A549 (cell line): ENCODE measurements at regions of chr17 and their contacts with region 1.

Region 1: GRCh38 chr17:7632492-7632894 is 2.6 kb downstream of the SHBG start:
- DNase-seq: peak; percentile 71 to 79
- ATAC-seq: peak; percentile 57 to 69; a peak in 5 of 6 replicates
- H3K4me3 ChIP-seq: no peak overlapping the region
- H3K27ac ChIP-seq: peak overlapping the region in 1 of 2 experiments; percentile 52; a peak in 2 of 6 replicates
- H3K4me1 ChIP-seq: peaks cover 5% of the 10 kb centered on the region; the same call in 2 of the 3 replicates
- CTCF ChIP-seq: peak; percentile 56; the same call in 2 of the 3 replicates
- EP300 ChIP-seq: no peak
- POLR2A ChIP-seq: no peak
- RAD21 ChIP-seq: peak; percentile 51 to 61

Region 2: GRCh38 chr17:7614422-7615264 is 17.9 kb before region 1 on chr17 and contains the start of gene FXR2:
- CTCF ChIA-PET with region 1: interaction called, 130 read pairs
- POLR2A ChIA-PET with region 1: interaction called, 34 read pairs
- DNase-seq: peak; percentile 99 to 100
- ATAC-seq: peak; percentile 91 to 96
- H3K4me3 ChIP-seq: peak within 1 kb of the TSS; percentile 84
- H3K27ac ChIP-seq: peak within 1 kb of the TSS; percentile 92 to 95
- H3K4me1 ChIP-seq: peaks cover 29% of the 10 kb centered on the region
- CTCF ChIP-seq: peak; percentile 58
- EP300 ChIP-seq: no peak
- POLR2A ChIP-seq: peak; percentile 77
- RAD21 ChIP-seq: 0 out of 5 replicates have a peak, but pooled peaks have one; percentile 10 to 29
- polyA plus RNA-seq, gene FXR2: 40.7 and 45.3 TPM in 2 replicates

Region 3: GRCh38 chr17:7656958-7657609 is 24.6 kb after region 1 on chr17:
- CTCF ChIA-PET with region 1: interaction called, 80 read pairs
- POLR2A ChIA-PET with region 1: interaction called, 13 read pairs
- DNase-seq: peak in 1 of 2 experiments; percentile 36
- ATAC-seq: peak in 1 of 2 experiments; percentile 15; a peak in 1 of 6 replicates
- H3K4me3 ChIP-seq: no peak overlapping the region
- H3K27ac ChIP-seq: no peak overlapping the region
- H3K4me1 ChIP-seq: no peaks in the 10 kb centered on the region
- CTCF ChIP-seq: no peak
- EP300 ChIP-seq: no peak
- POLR2A ChIP-seq: no peak
- RAD21 ChIP-seq: no peak

Region 4: DNA sequence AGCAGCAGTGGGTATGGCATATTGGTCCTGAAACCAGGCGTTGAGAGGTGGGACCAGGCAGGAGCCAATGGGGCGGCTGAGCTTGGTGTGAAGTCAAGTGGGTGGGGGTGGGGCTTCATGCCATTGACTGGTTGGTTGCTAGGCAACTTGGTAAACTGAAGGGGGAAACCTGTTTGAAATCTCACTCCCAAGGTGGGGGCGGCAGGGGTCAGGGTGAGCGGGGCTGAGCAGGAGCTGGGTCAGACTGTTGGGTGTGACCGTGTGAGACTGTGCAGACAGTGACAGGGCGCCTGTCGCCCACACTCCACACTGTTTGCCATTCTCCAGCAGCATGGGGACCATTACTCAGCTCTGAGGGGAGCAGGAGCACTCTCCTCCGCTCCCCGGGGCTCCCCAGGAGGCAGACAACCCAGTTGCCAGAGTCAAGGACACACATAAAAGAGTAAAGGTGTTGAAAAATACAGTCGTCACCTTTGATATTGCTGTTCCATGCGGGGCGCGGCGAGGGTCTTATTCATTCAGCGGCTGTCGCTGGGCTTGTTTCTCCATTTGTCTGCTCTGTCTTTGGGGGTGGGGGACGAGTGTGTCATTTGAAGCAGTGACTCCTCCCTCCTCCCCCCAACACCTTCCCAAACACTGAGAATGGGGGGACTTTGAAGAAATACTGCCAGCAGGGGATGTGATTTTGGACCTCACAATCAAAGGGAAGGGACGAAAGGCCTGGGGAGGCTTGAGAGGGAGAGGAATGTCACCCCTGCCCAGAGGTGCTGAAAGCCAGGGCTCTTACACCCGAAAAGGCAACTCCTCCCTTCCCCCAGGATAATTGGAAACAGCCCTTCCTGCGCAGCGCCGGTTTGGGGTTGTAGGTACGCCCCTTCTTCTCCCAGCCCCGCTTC is 71.3 kb after region 1 on chr17:
- CTCF ChIA-PET with region 1: interaction called, 14 read pairs
- POLR2A ChIA-PET with region 1: no interaction called
- DNase-seq: peak; percentile 34 to 77
- ATAC-seq: peak in 1 of 2 experiments; percentile 55; a peak in 3 of 6 replicates
- H3K4me3 ChIP-seq: no peak overlapping the region; the same call in 2 of the 3 replicates
- H3K27ac ChIP-seq: no peak overlapping the region
- H3K4me1 ChIP-seq: peaks cover 13% of the 10 kb centered on the region; the same call in 2 of the 3 replicates
- CTCF ChIP-seq: no peak
- EP300 ChIP-seq: no peak
- POLR2A ChIP-seq: no peak
- RAD21 ChIP-seq: no peak

Region 5: GRCh38 chr17:7716901-7717755 is 84.6 kb after region 1 on chr17 and contains the start of gene DNAH2:
- CTCF ChIA-PET with region 1: interaction called, 21 read pairs
- POLR2A ChIA-PET with region 1: no interaction called
- DNase-seq: peak; percentile 93 to 94
- ATAC-seq: peak; percentile 85 to 94
- H3K4me3 ChIP-seq: peak within 1 kb of the TSS; percentile 52
- H3K27ac ChIP-seq: peak within 1 kb of the TSS; percentile 79 to 89
- H3K4me1 ChIP-seq: peaks cover 21% of the 10 kb centered on the region
- CTCF ChIP-seq: peak; percentile 78
- EP300 ChIP-seq: no peak
- POLR2A ChIP-seq: peak; percentile 62
- RAD21 ChIP-seq: peak; percentile 68 to 75
- polyA plus RNA-seq, gene DNAH2: 0.08 TPM in 2 replicates

Region 6: GRCh38 chr17:8326511-8327302 is 694.2 kb after region 1 on chr17:
- CTCF ChIA-PET with region 1: no interaction called
- POLR2A ChIA-PET with region 1: no interaction called
- DNase-seq: no peak
- ATAC-seq: peak; percentile 10 to 54; a peak in 3 of 6 replicates
- H3K4me3 ChIP-seq: no peak overlapping the region
- H3K27ac ChIP-seq: no peak overlapping the region
- H3K4me1 ChIP-seq: no peaks in the 10 kb centered on the region
- CTCF ChIP-seq: no peak
- EP300 ChIP-seq: no peak
- POLR2A ChIP-seq: no peak
- RAD21 ChIP-seq: no peak